ENCODE measurements at regions of chr2 and their contacts with region 1.

Region 1: GRCh38 chr2:26144953-26145680 is 27.8 kb upstream of the GAREM2 start:
- DNase-seq: peak; percentile 89
- H3K4me3 Mint-ChIP-seq: no peak overlapping the region
- H3K27ac Mint-ChIP-seq: no peak overlapping the region
- H3K4me1 Mint-ChIP-seq: peaks cover 3% of the 10 kb centered on the region
- H3K27me3 Mint-ChIP-seq: peaks cover 9% of the 10 kb centered on the region

Region 2: GRCh38 chr2:25991965-25992364 is 153.2 kb before region 1 on chr2:
- intact Hi-C with region 1: loop called (anchors 1 kb)
- DNase-seq: no peak
- H3K4me3 Mint-ChIP-seq: no peak overlapping the region
- H3K27ac Mint-ChIP-seq: no peak overlapping the region
- H3K4me1 Mint-ChIP-seq: peaks cover 6% of the 10 kb centered on the region
- H3K27me3 Mint-ChIP-seq: peaks cover 6% of the 10 kb centered on the region

Region 3: GRCh38 chr2:26088032-26088643 is 57.0 kb before region 1 on chr2:
- intact Hi-C with region 1: loop called (anchors 1 kb)
- DNase-seq: peak; percentile 74
- H3K4me3 Mint-ChIP-seq: no peak overlapping the region
- H3K27ac Mint-ChIP-seq: no peak overlapping the region
- H3K4me1 Mint-ChIP-seq: peaks cover 50% of the 10 kb centered on the region
- H3K27me3 Mint-ChIP-seq: no peaks in the 10 kb centered on the region

Region 4: GRCh38 chr2:26172871-26173775 is 28.0 kb after region 1 on chr2 and contains the start of gene GAREM2:
- intact Hi-C with region 1: no loop called
- DNase-seq: no peak
- H3K4me3 Mint-ChIP-seq: peak within 1 kb of the TSS; percentile 84
- H3K27ac Mint-ChIP-seq: peak within 1 kb of the TSS; percentile 22
- H3K4me1 Mint-ChIP-seq: peaks cover 11% of the 10 kb centered on the region
- H3K27me3 Mint-ChIP-seq: peaks cover 44% of the 10 kb centered on the region
- total RNA-seq, gene GAREM2: 7.9 and 8.2 TPM in 2 replicates

Measured in activated CD4-positive, alpha-beta T cell treated with anti-CD3 and anti-CD28 coated beads, Interleukin-2, amount 10 ng/mL, durations not matched to agents 24 days and 14 days (primary cell).